H1 (cell line): ENCODE measurements at regions of chr15 and their contacts with region 1.

Region 1: GRCh38 chr15:65304389-65305144 is at the start of gene RNU5B-1:
- DNase-seq: peak in 1 of 2 experiments; percentile 81
- H3K4me3 ChIP-seq: peak within 1 kb of the TSS; percentile 25 to 59 (median 44); a peak in 6 of 8 replicates
- H3K27ac ChIP-seq: peak within 1 kb of the TSS; percentile 80; the same call in 1 of the 2 replicates
- H3K4me1 ChIP-seq: peaks cover 0 to 4% (median 1%) of the 10 kb centered on the region in 4 experiments; a peak in 1 of 7 replicates
- H3K27me3 ChIP-seq: no peaks in the 10 kb centered on the region
- CTCF ChIP-seq: peak; percentile 61 to 80 (median 73)
- EP300 ChIP-seq: no peak
- POLR2A ChIP-seq: peak; percentile 100
- RAD21 ChIP-seq: peak in 1 of 2 experiments; percentile 43; a peak in 2 of 4 replicates
- total RNA-seq, gene RNU5B-1: not detected in 2 replicates

Region 2: DNA sequence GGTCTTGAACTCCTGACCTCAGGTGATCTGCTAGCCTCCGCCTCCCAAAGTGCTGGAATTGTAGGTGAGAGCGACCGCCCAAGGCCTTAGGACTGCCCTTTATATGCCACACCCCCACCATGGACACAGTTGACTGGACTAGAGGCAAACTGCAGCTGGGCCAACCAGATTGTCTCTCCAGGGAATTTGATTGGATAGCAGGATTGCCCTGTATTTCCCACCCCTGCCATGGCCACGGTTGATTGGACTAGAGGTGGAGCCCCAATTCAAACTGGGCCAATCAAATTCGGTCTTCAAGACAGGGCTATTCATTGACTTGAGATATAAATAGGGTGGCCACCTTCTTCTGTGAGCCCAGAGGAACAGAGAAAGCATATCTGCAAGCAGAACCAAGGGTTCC is 112.6 kb before region 1 on chr15:
- CTCF ChIA-PET with region 1: interaction called, 33 read pairs
- POLR2A ChIA-PET with region 1: interaction called, 94 read pairs
- DNase-seq: no peak
- H3K4me3 ChIP-seq: no peak overlapping the region
- H3K27ac ChIP-seq: no peak overlapping the region
- H3K4me1 ChIP-seq: 0 out of 7 replicates have a peak, but pooled peaks cover 0 to 2% (median 0%) of the 10 kb centered on the region in 4 experiments
- H3K27me3 ChIP-seq: no peaks in the 10 kb centered on the region
- CTCF ChIP-seq: no peak
- EP300 ChIP-seq: no peak
- POLR2A ChIP-seq: no peak
- RAD21 ChIP-seq: no peak

Region 3: GRCh38 chr15:65318870-65319356 is 14.3 kb after region 1 on chr15:
- CTCF ChIA-PET with region 1: interaction called, 8 read pairs
- POLR2A ChIA-PET with region 1: interaction called, 138 read pairs
- DNase-seq: peak in 1 of 2 experiments; percentile 90
- H3K4me3 ChIP-seq: no peak overlapping the region
- H3K27ac ChIP-seq: no peak overlapping the region
- H3K4me1 ChIP-seq: no peaks in the 10 kb centered on the region
- H3K27me3 ChIP-seq: 0 out of 7 replicates have a peak, but pooled peaks cover 0 to 3% (median 0%) of the 10 kb centered on the region in 4 experiments
- CTCF ChIP-seq: peak; percentile 62 to 98 (median 92)
- EP300 ChIP-seq: no peak
- POLR2A ChIP-seq: no peak
- RAD21 ChIP-seq: peak; percentile 99 to 100

Region 4: GRCh38 chr15:65368302-65369211 is 64.0 kb after region 1 on chr15:
- CTCF ChIA-PET with region 1: interaction called, 3 read pairs
- POLR2A ChIA-PET with region 1: interaction called, 25 read pairs
- DNase-seq: peak; percentile 60 to 63
- H3K4me3 ChIP-seq: peak overlapping the region in 2 of 4 experiments; percentile 19 to 27; a peak in 3 of 8 replicates
- H3K27ac ChIP-seq: peak overlapping the region; percentile 26
- H3K4me1 ChIP-seq: peaks cover 31 to 56% (median 42%) of the 10 kb centered on the region in 4 experiments
- H3K27me3 ChIP-seq: no peaks in the 10 kb centered on the region
- CTCF ChIP-seq: no peak
- EP300 ChIP-seq: no peak
- POLR2A ChIP-seq: no peak
- RAD21 ChIP-seq: no peak

Region 5: DNA sequence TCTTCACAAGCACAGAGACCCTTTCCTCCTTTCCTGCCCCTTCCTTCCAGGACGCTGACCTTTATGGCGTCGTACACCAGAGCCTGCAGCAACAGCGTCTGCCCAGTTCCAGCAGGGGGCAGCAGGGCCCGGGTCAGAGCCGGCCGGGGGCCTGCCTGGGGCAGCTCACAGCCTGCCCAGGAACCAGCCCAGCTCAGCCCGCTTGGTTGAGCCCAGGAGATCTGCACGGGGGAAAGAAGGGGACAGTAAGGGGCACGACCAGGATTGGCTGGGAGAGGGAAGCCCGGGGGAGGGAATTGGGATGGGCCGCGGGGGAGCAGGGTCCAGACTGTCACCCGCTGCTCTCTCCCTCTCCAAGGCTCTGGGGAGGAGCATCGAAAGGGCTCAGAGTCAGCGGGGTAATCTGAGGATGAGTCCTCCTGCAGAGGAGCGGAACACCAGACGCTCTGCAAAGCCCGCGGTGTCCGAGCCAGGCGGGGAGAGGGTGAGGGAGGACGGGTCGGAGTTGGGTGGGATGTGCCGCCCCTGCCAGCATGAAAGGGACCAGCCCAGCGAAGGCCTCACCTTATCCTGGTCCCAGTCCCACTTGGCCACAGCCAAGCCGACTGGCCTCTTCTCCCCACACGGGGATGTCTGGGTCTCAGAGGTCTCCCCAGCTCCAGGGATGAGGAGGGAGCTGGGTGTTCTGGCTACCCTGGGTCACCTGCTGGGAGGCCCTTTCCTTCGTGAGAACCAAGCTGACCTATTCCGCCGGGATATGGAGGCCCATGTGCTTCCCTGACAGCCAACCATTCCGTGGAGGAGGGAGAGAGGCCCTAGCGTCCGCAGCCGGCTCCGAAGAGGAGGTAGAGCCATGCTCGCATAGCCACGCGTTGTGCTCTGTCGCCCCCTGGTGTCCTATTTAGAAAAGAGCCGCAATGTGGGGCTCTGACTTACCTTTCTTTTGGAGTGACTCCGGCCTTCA is 80.6 kb after region 1 on chr15:
- CTCF ChIA-PET with region 1: interaction called, 13 read pairs
- POLR2A ChIA-PET with region 1: interaction called, 42 read pairs
- DNase-seq: peak; percentile 70 to 94
- H3K4me3 ChIP-seq: peak overlapping the region in 3 of 4 experiments; percentile 22 to 47 (median 32); a peak in 4 of 8 replicates
- H3K27ac ChIP-seq: no peak overlapping the region
- H3K4me1 ChIP-seq: peaks cover 0 to 15% (median 6%) of the 10 kb centered on the region in 4 experiments; a peak in 6 of 7 replicates
- H3K27me3 ChIP-seq: peaks cover 0 to 1% (median 0%) of the 10 kb centered on the region in 4 experiments; a peak in 2 of 7 replicates
- CTCF ChIP-seq: peak; percentile 86 to 97 (median 96)
- EP300 ChIP-seq: 0 out of 3 replicates have a peak, but pooled peaks of 1 of the 2 experiments have one; percentile 2
- POLR2A ChIP-seq: 0 out of 3 replicates have a peak, but pooled peaks of 1 of the 2 experiments have one; percentile 24
- RAD21 ChIP-seq: peak; percentile 96 to 97

Region 6: GRCh38 chr15:65460741-65461347 is 156.3 kb after region 1 on chr15:
- CTCF ChIA-PET with region 1: no interaction called
- POLR2A ChIA-PET with region 1: no interaction called
- DNase-seq: no peak
- H3K4me3 ChIP-seq: no peak overlapping the region
- H3K27ac ChIP-seq: no peak overlapping the region
- H3K4me1 ChIP-seq: no peaks in the 10 kb centered on the region
- H3K27me3 ChIP-seq: no peaks in the 10 kb centered on the region
- CTCF ChIP-seq: no peak
- EP300 ChIP-seq: no peak
- POLR2A ChIP-seq: no peak
- RAD21 ChIP-seq: no peak